Posterior vena cava (tissue), 2 donors: ENCODE measurements at regions of chr3 and their contacts with region 1.

Region 1: GRCh38 chr3:120558771-120559241 is 37.3 kb upstream of the NDUFB4 start:
- DNase-seq: peak; percentile 97

Region 2: GRCh38 chr3:120245386-120245785 is 313.4 kb before region 1 on chr3:
- intact Hi-C with region 1: loop called (anchors 1 to 10 kb)
- DNase-seq: no peak

Region 3: GRCh38 chr3:120399372-120399771 is 159.4 kb before region 1 on chr3:
- intact Hi-C with region 1: no loop called
- DNase-seq: no peak

Region 4: DNA sequence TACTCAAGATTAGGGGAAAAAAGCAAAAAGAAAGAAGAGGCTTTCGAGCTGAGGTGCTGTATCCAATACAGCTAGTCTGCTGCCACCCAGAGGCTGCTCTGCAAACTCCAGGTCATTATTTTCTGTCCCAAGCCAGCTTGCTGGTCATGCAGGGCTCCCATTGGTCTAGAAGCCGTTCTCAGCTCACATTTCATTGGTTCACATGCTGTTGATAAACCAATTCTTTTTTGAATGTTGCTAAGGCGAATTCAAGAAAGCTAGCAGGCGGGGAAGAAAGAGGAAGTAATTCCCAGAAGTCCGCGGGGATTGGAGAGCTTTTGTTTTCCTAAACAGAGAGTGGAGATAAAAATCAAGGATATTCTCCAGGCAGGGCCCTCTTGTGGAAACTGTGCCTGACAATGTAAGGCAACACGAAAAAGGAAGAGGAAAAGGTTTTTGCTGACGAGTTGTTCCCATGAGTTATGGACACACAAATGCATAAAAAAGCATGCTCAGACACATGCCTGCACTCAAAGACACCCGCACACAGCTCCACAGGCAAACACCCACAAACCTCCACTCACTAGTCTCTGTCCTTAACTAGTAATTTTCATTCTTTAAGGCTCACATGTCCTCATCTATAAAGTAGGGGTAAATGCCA is 141.4 kb before region 1 on chr3:
- intact Hi-C with region 1: loop called (anchors 1 to 5 kb)
- DNase-seq: peak; percentile 95

Region 5: DNA sequence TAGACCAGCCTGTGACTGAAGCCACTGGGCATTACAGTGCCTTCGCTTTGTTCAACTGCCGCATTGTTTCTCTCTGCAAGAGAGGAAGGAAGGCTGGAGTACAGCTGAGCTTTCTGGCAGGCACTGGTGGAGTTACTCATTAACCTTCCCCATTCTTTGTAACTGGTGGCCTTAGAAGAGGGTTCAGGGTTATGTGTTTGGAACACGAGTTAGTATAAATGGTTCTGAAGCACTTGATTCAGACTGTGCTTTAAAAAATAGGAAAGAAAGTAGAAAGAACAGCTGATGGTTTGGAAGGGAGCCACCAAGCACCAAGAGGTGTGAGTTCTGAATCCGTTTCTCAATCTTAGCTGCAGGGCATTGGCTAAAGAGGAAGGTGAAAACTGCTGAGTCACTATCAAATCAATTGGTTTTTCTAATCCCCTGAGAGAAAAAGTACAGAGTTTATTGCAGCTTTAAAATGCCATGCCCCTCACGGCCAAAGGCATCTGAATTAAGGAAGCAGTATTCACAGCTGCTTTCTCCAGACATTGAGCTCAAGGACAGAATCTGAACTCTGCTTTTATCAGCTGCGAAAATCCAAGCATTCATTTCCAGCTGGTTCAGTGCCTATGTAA is 119.6 kb after region 1 on chr3:
- intact Hi-C with region 1: no loop called
- DNase-seq: no peak

Region 6: DNA sequence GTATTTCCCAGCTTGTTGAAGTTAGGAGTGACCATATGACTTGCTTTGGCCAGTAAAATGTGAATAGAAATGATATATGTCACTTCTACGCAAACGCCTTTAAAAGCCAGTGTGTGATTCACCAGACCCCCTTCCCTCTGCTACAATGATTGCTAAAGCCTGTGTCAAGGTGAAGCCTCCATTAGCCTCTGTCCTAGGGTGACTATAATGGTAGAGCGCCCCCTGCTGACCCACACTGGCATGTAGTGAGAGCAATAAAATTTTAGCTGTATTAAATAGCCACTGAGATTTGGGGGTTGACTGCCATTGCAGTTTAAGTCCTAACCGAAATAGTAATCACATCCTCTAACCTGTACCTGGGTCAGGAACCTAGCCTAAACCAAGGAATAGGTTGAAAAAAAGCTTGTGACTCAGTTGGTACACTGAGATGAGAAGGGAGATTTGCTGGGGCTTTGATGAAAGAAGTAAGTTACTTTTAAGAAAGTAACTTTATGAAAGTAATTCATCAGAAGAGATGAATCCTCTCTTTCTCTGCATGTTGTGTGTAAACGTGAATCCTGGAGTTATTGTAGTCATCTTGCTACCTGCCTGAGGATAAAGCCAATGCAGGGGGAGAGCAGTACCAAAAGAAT is 236.3 kb after region 1 on chr3:
- intact Hi-C with region 1: loop called (anchors 10 kb)
- DNase-seq: peak; percentile 91

Region 7: GRCh38 chr3:120823156-120823555 is 264.4 kb after region 1 on chr3:
- intact Hi-C with region 1: no loop called
- DNase-seq: no peak